Naive thymus-derived CD4-positive, alpha-beta T cell (primary cell): ENCODE measurements at regions of chr1 and their contacts with region 1.

Region 1: DNA sequence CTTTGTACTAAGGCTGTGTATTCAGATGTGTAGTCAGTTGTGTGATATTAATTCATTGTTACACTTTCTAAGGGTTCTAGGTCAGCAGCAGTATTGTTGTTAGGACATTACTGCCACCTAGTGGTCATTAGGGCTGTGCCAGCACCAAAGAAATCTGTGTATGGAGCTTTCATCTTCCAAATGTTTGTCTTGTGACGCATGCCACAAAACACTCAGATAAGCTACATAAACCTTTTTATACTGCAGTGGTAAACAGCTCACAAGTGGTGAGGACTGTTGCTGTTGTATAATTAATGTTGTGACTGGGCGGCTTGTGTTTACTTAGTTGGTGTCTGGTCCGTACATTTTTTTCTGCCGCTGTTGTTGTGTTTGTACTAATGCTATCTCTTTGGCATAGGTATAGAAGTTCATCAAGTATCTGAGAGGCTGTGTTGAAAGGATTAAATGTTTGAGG is 51.7 kb downstream of the S1PR1 start:
- DNase-seq: peak in 8 of 9 donors; percentile 48 to 83 (median 78)
- ATAC-seq: peak; percentile 83
- H3K4me3 ChIP-seq: no peak overlapping the region
- H3K4me3 Mint-ChIP-seq: peak overlapping the region in 6 of 10 donors; percentile 4 to 47 (median 20)
- H3K27ac ChIP-seq: peak overlapping the region; percentile 20
- H3K27ac Mint-ChIP-seq: peak overlapping the region; percentile 63 to 93 (median 80)
- H3K4me1 ChIP-seq: peaks cover 66 to 68% of the 10 kb centered on the region in 2 donors
- H3K4me1 Mint-ChIP-seq: peaks cover 55 to 82% (median 73%) of the 10 kb centered on the region in 7 donors
- H3K27me3 ChIP-seq: no peaks in the 10 kb centered on the region
- H3K27me3 Mint-ChIP-seq: no peaks in the 10 kb centered on the region

Region 2: DNA sequence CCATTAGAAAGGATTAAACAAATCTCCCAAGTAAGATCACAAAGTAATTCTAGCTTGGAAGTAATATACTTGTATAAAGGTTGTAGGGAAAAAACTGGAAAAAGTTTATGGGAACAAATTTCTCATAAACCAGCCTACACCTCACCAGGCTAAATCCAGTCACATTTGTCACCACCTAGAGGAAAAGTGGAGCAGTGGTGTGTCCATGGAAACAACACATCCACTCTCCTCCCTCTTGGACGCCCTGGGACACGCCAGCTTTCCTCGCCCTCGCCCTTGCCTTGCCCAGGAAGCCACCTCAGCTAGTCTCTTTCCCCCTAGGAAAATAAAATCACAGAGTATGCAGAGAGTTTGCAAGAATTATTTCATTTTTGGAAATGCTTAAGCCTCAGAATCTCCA is 1640.4 kb before region 1 on chr1:
- CTCF ChIA-PET with region 1: no interaction called
- POLR2A ChIA-PET with region 1: no interaction called
- intact Hi-C with region 1: no loop called
- DNase-seq: no peak
- ATAC-seq: no peak
- H3K4me3 ChIP-seq: no peak overlapping the region
- H3K4me3 Mint-ChIP-seq: no peak overlapping the region
- H3K27ac ChIP-seq: no peak overlapping the region
- H3K27ac Mint-ChIP-seq: no peak overlapping the region
- H3K4me1 ChIP-seq: no peaks in the 10 kb centered on the region
- H3K4me1 Mint-ChIP-seq: peaks cover 0 to 2% (median 0%) of the 10 kb centered on the region in 7 donors
- H3K27me3 ChIP-seq: peaks cover 0 to 6% of the 10 kb centered on the region in 2 donors
- H3K27me3 Mint-ChIP-seq: peaks cover 26 to 42% (median 30%) of the 10 kb centered on the region in 5 donors

Region 3: GRCh38 chr1:100895540-100896483 is 392.7 kb before region 1 on chr1 and contains the start of gene SLC30A7:
- CTCF ChIA-PET with region 1: interaction called, 3 read pairs
- POLR2A ChIA-PET with region 1: interaction called, 16 read pairs
- intact Hi-C with region 1: loop called in 1 of 2 experiments (anchors 1 kb)
- DNase-seq: peak; percentile 93 to 99 (median 94)
- ATAC-seq: peak; percentile 90
- H3K4me3 ChIP-seq: peak within 1 kb of the TSS; percentile 96
- H3K4me3 Mint-ChIP-seq: peak within 1 kb of the TSS; percentile 91 to 100 (median 99)
- H3K27ac ChIP-seq: peak within 1 kb of the TSS; percentile 95
- H3K27ac Mint-ChIP-seq: peak within 1 kb of the TSS; percentile 95 to 100 (median 99)
- H3K4me1 ChIP-seq: peaks cover 7 to 10% of the 10 kb centered on the region in 2 donors
- H3K4me1 Mint-ChIP-seq: peaks cover 17 to 58% (median 50%) of the 10 kb centered on the region in 7 donors
- H3K27me3 ChIP-seq: no peaks in the 10 kb centered on the region
- H3K27me3 Mint-ChIP-seq: no peaks in the 10 kb centered on the region
- total RNA-seq, gene SLC30A7: 29.9 to 44.5 (median 38.8) TPM

Region 4: GRCh38 chr1:101025657-101026504 is 262.6 kb before region 1 on chr1 and contains the start of gene DPH5:
- CTCF ChIA-PET with region 1: interaction called, 3 read pairs
- POLR2A ChIA-PET with region 1: interaction called, 7 read pairs
- intact Hi-C with region 1: loop called (anchors 2 kb)
- DNase-seq: peak; percentile 72 to 91 (median 87)
- ATAC-seq: peak; percentile 99
- H3K4me3 ChIP-seq: peak within 1 kb of the TSS; percentile 85
- H3K4me3 Mint-ChIP-seq: peak within 1 kb of the TSS; percentile 89 to 97 (median 94)
- H3K27ac ChIP-seq: peak within 1 kb of the TSS; percentile 88
- H3K27ac Mint-ChIP-seq: peak within 1 kb of the TSS; percentile 92 to 100 (median 98)
- H3K4me1 ChIP-seq: peaks cover 14 to 44% of the 10 kb centered on the region in 2 donors
- H3K4me1 Mint-ChIP-seq: peaks cover 42 to 95% (median 78%) of the 10 kb centered on the region in 7 donors
- H3K27me3 ChIP-seq: no peaks in the 10 kb centered on the region
- H3K27me3 Mint-ChIP-seq: no peaks in the 10 kb centered on the region
- total RNA-seq, gene DPH5: 26.3 to 72.2 (median 45.3) TPM

Region 5: GRCh38 chr1:101122452-101123166 is 165.9 kb before region 1 on chr1:
- CTCF ChIA-PET with region 1: interaction called, 12 read pairs
- POLR2A ChIA-PET with region 1: interaction called, 3 read pairs
- intact Hi-C with region 1: no loop called
- DNase-seq: peak in 3 of 9 donors; percentile 19 to 32 (median 28)
- ATAC-seq: peak; percentile 66
- H3K4me3 ChIP-seq: no peak overlapping the region
- H3K4me3 Mint-ChIP-seq: peak overlapping the region; percentile 12 to 81 (median 59)
- H3K27ac ChIP-seq: peak overlapping the region; percentile 63
- H3K27ac Mint-ChIP-seq: peak overlapping the region; percentile 36 to 95 (median 91)
- H3K4me1 ChIP-seq: peaks cover 26 to 32% of the 10 kb centered on the region in 2 donors
- H3K4me1 Mint-ChIP-seq: peaks cover 28 to 83% (median 65%) of the 10 kb centered on the region in 7 donors
- H3K27me3 ChIP-seq: no peaks in the 10 kb centered on the region
- H3K27me3 Mint-ChIP-seq: peaks cover 0 to 4% (median 0%) of the 10 kb centered on the region in 5 donors

Region 6: GRCh38 chr1:101247404-101248287 is 40.9 kb before region 1 on chr1:
- CTCF ChIA-PET with region 1: interaction called, 61 read pairs
- POLR2A ChIA-PET with region 1: interaction called, 633 read pairs
- intact Hi-C with region 1: no loop called
- DNase-seq: no peak
- ATAC-seq: peak; percentile 54
- H3K4me3 ChIP-seq: no peak overlapping the region
- H3K4me3 Mint-ChIP-seq: peak overlapping the region in 9 of 10 donors; percentile 3 to 77 (median 42)
- H3K27ac ChIP-seq: peak overlapping the region; percentile 25
- H3K27ac Mint-ChIP-seq: peak overlapping the region in 8 of 9 donors; percentile 28 to 100 (median 73)
- H3K4me1 ChIP-seq: peaks cover 14 to 56% of the 10 kb centered on the region in 2 donors
- H3K4me1 Mint-ChIP-seq: peaks cover 26 to 93% (median 79%) of the 10 kb centered on the region in 7 donors
- H3K27me3 ChIP-seq: no peaks in the 10 kb centered on the region
- H3K27me3 Mint-ChIP-seq: no peaks in the 10 kb centered on the region

Region 7: DNA sequence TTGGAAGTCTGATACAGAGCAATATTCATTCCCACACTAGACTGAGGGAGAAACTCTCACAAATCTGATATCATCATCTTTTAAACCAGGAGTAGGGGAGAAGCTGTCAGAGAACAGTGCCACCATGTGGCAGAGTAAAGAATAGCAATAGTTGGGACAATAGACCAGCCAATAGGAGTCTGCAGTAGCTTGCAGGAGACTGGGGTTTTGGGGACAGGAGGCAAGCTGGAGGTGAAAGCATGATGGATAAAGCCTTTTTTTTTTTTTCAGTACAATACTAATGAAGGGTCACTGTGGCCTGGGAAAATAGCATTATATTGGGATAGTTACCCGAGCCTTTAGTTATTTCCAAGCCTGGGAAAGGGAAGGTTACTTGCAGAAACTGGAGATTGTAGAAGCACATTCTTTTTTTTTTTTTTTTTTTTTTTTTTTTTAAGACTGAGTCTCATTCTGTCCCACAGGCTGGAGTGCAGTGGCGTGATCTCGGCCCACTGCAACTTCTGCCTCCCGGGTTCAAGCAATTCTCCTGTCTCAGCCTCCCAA is 69.0 kb after region 1 on chr1:
- CTCF ChIA-PET with region 1: interaction called, 11 read pairs
- POLR2A ChIA-PET with region 1: interaction called, 4 read pairs
- intact Hi-C with region 1: loop called (anchors 1 to 5 kb)
- DNase-seq: peak; percentile 26 to 90 (median 85)
- ATAC-seq: peak; percentile 100
- H3K4me3 ChIP-seq: no peak overlapping the region
- H3K4me3 Mint-ChIP-seq: peak overlapping the region in 3 of 10 donors; percentile 1 to 84 (median 60)
- H3K27ac ChIP-seq: no peak overlapping the region
- H3K27ac Mint-ChIP-seq: peak overlapping the region in 8 of 9 donors; percentile 42 to 97 (median 80)
- H3K4me1 ChIP-seq: peaks cover 6 to 7% of the 10 kb centered on the region in 2 donors
- H3K4me1 Mint-ChIP-seq: peaks cover 5 to 12% (median 9%) of the 10 kb centered on the region in 7 donors
- H3K27me3 ChIP-seq: no peaks in the 10 kb centered on the region
- H3K27me3 Mint-ChIP-seq: peaks cover 0 to 19% (median 0%) of the 10 kb centered on the region in 5 donors